B cell (primary cell): ENCODE measurements at regions of chr7 and their contacts with region 1.

Region 1: GRCh38 chr7:64902806-64903721 is at the start of gene ZNF273:
- DNase-seq: peak; percentile 89
- ATAC-seq: peak; percentile 99
- H3K4me3 ChIP-seq: peak within 1 kb of the TSS; percentile 53 to 98 (median 96)
- H3K4me3 Mint-ChIP-seq: peak within 1 kb of the TSS; percentile 98
- H3K27ac ChIP-seq: peak within 1 kb of the TSS; percentile 83 to 88
- H3K27ac Mint-ChIP-seq: peak within 1 kb of the TSS; percentile 94
- H3K4me1 ChIP-seq: peaks cover 22 to 42% of the 10 kb centered on the region in 2 donors
- H3K4me1 Mint-ChIP-seq: peaks cover 47% of the 10 kb centered on the region
- H3K27me3 ChIP-seq: no peaks in the 10 kb centered on the region
- H3K27me3 Mint-ChIP-seq: no peaks in the 10 kb centered on the region
- CTCF ChIP-seq: no peak
- total RNA-seq, gene ZNF273: 12.6 and 12.7 TPM in 2 replicates

Region 2: GRCh38 chr7:64307254-64308015 is 595.6 kb before region 1 on chr7:
- CTCF ChIA-PET with region 1: no interaction called
- POLR2A ChIA-PET with region 1: no interaction called
- intact Hi-C with region 1: loop called (anchors 2 kb)
- DNase-seq: peak; percentile 96
- ATAC-seq: peak; percentile 94
- H3K4me3 ChIP-seq: peak overlapping the region; percentile 55 to 87 (median 75)
- H3K4me3 Mint-ChIP-seq: peak overlapping the region; percentile 90
- H3K27ac ChIP-seq: peak overlapping the region; percentile 82 to 92
- H3K27ac Mint-ChIP-seq: peak overlapping the region; percentile 88
- H3K4me1 ChIP-seq: peaks cover 24 to 30% of the 10 kb centered on the region in 2 donors
- H3K4me1 Mint-ChIP-seq: peaks cover 37% of the 10 kb centered on the region
- H3K27me3 ChIP-seq: no peaks in the 10 kb centered on the region
- H3K27me3 Mint-ChIP-seq: no peaks in the 10 kb centered on the region
- CTCF ChIP-seq: no peak

Region 3: DNA sequence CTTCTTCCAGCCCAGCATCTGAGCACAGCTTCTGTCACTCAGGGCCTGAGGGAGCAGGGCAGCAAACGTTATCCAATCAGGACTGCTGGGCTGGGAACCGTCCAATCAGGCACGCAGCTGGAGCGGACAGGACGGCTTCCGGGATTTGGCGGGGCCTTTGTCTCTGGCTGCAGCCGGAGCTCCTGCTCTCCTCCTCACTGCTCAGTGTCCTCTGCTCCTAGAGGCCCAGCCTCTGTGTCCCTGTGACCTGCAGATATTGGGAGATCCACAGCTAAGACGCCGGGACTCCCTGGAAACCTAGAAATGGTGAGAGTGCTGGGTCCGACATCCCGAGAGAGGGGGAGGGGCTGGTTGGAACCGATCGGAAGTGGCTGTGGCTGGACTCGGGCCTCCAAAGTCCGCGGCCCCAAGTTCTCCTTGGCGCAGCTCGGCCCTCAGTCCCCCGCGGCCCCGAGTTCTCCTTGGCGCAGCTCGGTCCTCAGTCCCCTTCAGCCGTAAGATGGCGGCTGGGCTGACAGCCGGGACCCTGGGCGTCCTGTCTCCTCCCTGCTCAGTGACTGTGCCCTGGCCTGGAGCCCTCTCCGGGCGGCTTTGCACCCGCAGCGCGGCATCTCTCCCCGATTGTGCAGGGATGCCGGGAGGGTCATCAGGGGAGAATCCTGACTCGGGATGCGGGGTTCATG is 236.9 kb before region 1 on chr7 and contains the start of gene ZNF107:
- CTCF ChIA-PET with region 1: no interaction called
- POLR2A ChIA-PET with region 1: interaction called, 11 read pairs
- intact Hi-C with region 1: loop called (anchors 1 kb)
- DNase-seq: peak; percentile 88
- ATAC-seq: peak; percentile 96
- H3K4me3 ChIP-seq: peak within 1 kb of the TSS; percentile 70 to 100 (median 96)
- H3K4me3 Mint-ChIP-seq: peak within 1 kb of the TSS; percentile 97
- H3K27ac ChIP-seq: peak within 1 kb of the TSS; percentile 92 to 96
- H3K27ac Mint-ChIP-seq: peak within 1 kb of the TSS; percentile 97
- H3K4me1 ChIP-seq: peaks cover 35 to 37% of the 10 kb centered on the region in 2 donors
- H3K4me1 Mint-ChIP-seq: peaks cover 59% of the 10 kb centered on the region
- H3K27me3 ChIP-seq: no peaks in the 10 kb centered on the region
- H3K27me3 Mint-ChIP-seq: no peaks in the 10 kb centered on the region
- CTCF ChIP-seq: no peak
- total RNA-seq, gene ZNF107: 70.7 and 73.7 TPM in 2 replicates

Region 4: DNA sequence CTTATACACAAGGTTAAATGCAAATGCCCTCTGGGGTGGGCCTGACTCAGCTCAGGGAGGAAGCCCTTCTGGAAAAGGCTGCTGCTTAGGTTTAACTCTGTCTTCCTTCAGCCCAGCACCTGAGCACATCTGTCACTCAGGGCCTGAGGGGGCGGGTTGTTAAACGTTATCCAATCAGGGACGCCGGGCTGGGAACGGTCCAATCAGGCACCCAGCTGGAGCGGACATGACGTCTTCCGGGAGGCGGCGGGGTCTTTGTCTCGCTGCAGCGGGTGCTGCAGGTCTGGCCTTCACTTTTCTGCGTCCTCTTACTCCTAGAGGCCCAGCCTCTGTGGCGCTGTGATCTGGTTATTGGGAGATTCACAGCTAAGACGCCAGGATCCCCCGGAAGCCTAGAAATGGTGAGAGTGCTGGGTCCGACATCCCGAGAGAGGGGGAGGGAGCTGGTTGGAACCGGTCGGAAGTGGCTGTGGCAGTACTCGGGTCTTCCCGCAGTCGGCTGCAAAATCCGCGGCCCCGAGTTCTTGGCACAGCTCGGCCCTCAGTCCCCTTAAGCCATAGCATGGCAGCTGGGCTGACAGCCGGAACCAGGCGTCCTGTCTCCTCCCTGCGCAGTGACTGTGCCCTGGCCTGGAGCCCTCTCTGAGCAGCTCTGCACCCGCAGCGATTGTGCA is 108.8 kb before region 1 on chr7 and contains the start of gene ZNF138:
- CTCF ChIA-PET with region 1: no interaction called
- POLR2A ChIA-PET with region 1: no interaction called
- intact Hi-C with region 1: loop called (anchors 1 kb)
- DNase-seq: peak; percentile 93
- ATAC-seq: peak; percentile 99
- H3K4me3 ChIP-seq: peak within 1 kb of the TSS; percentile 72 to 89 (median 76)
- H3K4me3 Mint-ChIP-seq: peak within 1 kb of the TSS; percentile 99
- H3K27ac ChIP-seq: peak within 1 kb of the TSS; percentile 76 to 84
- H3K27ac Mint-ChIP-seq: peak within 1 kb of the TSS; percentile 97
- H3K4me1 ChIP-seq: peaks cover 13 to 14% of the 10 kb centered on the region in 2 donors
- H3K4me1 Mint-ChIP-seq: peaks cover 24% of the 10 kb centered on the region
- H3K27me3 ChIP-seq: no peaks in the 10 kb centered on the region
- H3K27me3 Mint-ChIP-seq: no peaks in the 10 kb centered on the region
- CTCF ChIP-seq: no peak
- total RNA-seq, gene ZNF138: 23.0 and 26.6 TPM in 2 replicates

Region 5: DNA sequence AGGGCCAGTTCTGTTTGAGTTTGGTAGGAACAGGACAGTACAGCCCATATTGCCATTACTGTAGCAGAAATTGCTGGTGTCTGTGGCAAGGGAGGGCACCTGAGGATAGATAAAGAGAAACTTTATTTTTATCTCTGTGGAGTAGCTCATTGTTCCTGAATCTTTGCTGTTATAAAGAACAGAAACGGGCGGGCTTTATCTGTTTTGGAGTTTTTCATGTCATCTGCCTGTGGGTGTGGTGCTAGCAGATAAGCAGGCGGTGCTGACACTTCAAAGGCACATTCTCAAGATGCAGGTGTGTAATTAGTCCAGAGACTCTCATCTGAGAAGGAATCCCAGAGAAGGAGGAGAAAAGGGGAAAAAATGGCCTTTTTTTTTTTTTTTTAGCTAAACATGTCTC is 11.5 kb after region 1 on chr7:
- CTCF ChIA-PET with region 1: no interaction called
- POLR2A ChIA-PET with region 1: no interaction called
- intact Hi-C with region 1: no loop called
- DNase-seq: no peak
- ATAC-seq: no peak
- H3K4me3 ChIP-seq: no peak overlapping the region
- H3K4me3 Mint-ChIP-seq: no peak overlapping the region
- H3K27ac ChIP-seq: no peak overlapping the region
- H3K27ac Mint-ChIP-seq: no peak overlapping the region
- H3K4me1 ChIP-seq: no peaks in the 10 kb centered on the region
- H3K4me1 Mint-ChIP-seq: peaks cover 27% of the 10 kb centered on the region
- H3K27me3 ChIP-seq: no peaks in the 10 kb centered on the region
- H3K27me3 Mint-ChIP-seq: no peaks in the 10 kb centered on the region
- CTCF ChIP-seq: no peak

Region 6: DNA sequence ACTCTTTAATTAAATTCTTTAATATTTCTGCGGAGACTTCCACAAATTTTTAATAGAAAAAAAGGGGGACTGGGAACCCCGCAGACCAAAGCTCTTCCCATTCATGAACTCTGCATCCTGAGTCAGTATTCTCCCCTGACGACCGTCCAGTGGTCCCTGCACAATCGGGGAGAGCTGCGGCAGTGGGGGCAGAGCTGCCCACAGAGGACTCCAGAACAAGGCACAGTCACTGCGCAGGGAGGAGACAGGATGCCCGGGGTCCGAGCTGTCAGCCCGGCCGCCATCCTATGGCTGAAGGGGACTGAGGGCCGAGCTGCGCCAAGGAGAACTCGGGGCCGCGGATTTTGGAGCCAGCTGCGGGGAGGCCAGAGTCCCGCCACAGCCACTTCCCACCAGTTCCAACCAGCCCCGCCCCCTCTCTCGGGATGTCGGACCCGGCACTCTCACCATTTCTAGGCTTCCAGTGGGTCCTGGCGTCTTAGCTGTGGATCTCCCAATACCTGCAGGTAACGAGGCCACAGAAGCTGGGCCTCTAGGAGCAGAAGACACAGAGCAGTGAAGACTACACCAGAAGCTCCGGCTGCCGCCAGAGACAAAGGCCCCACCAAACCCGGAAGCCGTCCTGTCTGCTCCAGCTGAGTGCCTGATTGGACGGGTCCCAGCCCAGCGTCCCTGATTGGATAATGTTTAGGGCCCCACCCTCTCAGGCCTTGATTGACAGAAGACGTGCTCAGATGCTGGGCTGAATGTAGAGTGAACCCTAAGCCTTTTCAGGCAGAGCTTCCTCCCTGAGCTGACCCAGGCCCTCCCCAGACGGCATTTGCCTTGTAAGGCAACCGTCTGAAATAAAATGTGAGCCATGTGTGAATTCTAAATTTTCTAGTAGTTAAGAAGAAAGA is 103.3 kb after region 1 on chr7 and contains the start of gene ERV3-1:
- CTCF ChIA-PET with region 1: interaction called, 3 read pairs
- POLR2A ChIA-PET with region 1: no interaction called
- intact Hi-C with region 1: loop called (anchors 2 kb)
- DNase-seq: peak; percentile 95
- ATAC-seq: peak; percentile 99
- H3K4me3 ChIP-seq: peak within 1 kb of the TSS; percentile 60 to 89 (median 87)
- H3K4me3 Mint-ChIP-seq: peak within 1 kb of the TSS; percentile 95
- H3K27ac ChIP-seq: peak within 1 kb of the TSS; percentile 84 to 96
- H3K27ac Mint-ChIP-seq: peak within 1 kb of the TSS; percentile 91
- H3K4me1 ChIP-seq: peaks cover 20 to 33% of the 10 kb centered on the region in 2 donors
- H3K4me1 Mint-ChIP-seq: peaks cover 46% of the 10 kb centered on the region
- H3K27me3 ChIP-seq: no peaks in the 10 kb centered on the region
- H3K27me3 Mint-ChIP-seq: no peaks in the 10 kb centered on the region
- CTCF ChIP-seq: no peak
- total RNA-seq, gene ERV3-1: 29.1 and 30.7 TPM in 2 replicates

Region 7: DNA sequence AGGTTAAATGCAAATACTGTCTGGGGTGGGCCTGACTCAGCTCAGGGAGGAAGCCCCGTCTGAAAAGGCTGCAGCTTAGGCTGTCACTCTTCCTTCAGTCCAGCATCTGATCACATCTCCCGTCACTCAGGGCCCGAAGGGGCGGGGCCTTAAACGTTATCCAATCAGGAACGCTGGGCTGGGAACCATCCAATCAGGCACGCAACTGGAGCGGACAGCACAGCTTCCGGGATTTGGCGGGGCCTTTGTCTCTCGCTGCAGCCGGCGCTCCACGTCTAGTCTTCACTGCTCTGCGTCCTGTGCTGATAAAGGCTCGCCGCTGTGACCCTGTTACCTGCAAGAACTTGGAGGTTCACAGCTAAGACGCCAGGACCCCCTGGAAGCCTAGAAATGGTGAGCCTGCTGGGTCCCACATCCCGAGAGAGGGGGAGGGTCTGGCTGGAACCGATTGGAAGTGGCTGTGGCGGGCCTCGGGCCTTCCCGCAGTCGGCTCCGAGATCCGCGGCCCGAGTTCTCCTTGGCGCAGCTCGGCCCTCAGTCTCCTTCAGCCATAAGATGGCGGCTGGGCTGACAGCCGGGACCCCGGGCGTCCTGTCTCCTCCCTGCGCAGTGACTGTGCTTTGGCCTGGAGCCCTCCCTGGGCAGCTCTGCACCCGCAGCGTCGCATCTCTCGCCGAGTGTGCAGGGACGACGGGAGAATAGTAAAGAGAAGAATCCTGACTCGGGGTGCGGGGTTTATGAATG is 470.7 kb after region 1 on chr7 and contains the start of gene ZNF92:
- CTCF ChIA-PET with region 1: no interaction called
- POLR2A ChIA-PET with region 1: no interaction called
- intact Hi-C with region 1: loop called (anchors 10 kb)
- DNase-seq: peak; percentile 96
- ATAC-seq: peak; percentile 98
- H3K4me3 ChIP-seq: peak within 1 kb of the TSS; percentile 88 to 99 (median 92)
- H3K4me3 Mint-ChIP-seq: peak within 1 kb of the TSS; percentile 96
- H3K27ac ChIP-seq: peak within 1 kb of the TSS; percentile 85 to 91
- H3K27ac Mint-ChIP-seq: peak within 1 kb of the TSS; percentile 95
- H3K4me1 ChIP-seq: peaks cover 23 to 31% of the 10 kb centered on the region in 2 donors
- H3K4me1 Mint-ChIP-seq: peaks cover 46% of the 10 kb centered on the region
- H3K27me3 ChIP-seq: no peaks in the 10 kb centered on the region
- H3K27me3 Mint-ChIP-seq: no peaks in the 10 kb centered on the region
- CTCF ChIP-seq: no peak
- total RNA-seq, gene ZNF92: 61.0 and 65.4 TPM in 2 replicates